Activated CD4-positive, alpha-beta T cell treated with anti-CD3 and anti-CD28 coated beads, Interleukin-2, amount 10 ng/mL, durations not matched to agents 7 days and 5 days (primary cell): ENCODE measurements at regions of chr11 and their contacts with region 1.

Region 1: GRCh38 chr11:128522055-128522942 is 65.1 kb downstream of the ETS1 start:
- DNase-seq: peak; percentile 92
- H3K4me3 Mint-ChIP-seq: peak overlapping the region; percentile 96
- H3K27ac Mint-ChIP-seq: peak overlapping the region; percentile 93
- H3K4me1 Mint-ChIP-seq: peaks cover 41% of the 10 kb centered on the region
- H3K27me3 Mint-ChIP-seq: no peaks in the 10 kb centered on the region

Region 2: DNA sequence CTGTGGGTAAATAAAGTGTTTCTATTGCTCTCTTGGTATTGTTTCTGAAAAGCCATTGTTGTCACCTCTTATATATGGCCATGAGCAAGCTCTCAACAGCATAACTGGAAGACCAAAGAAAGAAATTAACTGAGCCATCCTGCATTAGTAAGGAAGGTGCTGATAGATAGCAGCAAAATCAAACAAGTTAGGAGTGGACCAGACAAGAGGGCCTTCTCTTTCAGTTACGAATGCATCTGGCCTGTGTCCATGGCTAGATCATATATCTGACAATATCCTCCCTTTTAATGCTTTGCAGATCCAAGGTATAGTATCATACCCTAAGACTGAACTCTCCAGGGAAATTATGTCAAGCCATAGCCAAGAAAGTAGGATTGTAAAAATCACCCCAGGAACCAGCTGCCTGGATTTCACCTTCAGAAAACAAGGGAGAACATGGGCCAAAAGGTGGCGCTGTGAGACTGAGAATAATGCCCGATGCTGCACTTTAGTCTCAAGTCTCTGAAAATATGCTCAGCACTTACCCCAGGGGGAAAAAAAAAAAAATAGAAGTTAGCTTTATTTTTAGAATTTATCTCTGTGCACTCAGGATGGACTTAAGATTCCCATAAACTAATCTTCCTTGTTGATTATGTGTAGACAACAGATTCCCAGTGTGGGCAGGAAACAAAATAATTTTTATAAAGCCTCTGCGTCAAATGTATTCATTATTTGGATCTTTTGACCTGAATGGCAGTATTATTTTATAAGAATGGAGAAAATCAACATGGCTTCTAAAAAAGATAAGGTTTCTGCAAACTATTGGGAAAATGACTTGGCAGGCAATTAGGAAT is 350.0 kb before region 1 on chr11:
- CTCF ChIA-PET with region 1: no interaction called
- POLR2A ChIA-PET with region 1: no interaction called
- DNase-seq: peak; percentile 89
- H3K4me3 Mint-ChIP-seq: no peak overlapping the region
- H3K27ac Mint-ChIP-seq: no peak overlapping the region
- H3K4me1 Mint-ChIP-seq: peaks cover 6% of the 10 kb centered on the region
- H3K27me3 Mint-ChIP-seq: peaks cover 12% of the 10 kb centered on the region

Region 3: GRCh38 chr11:128290106-128290840 is 232.0 kb before region 1 on chr11:
- CTCF ChIA-PET with region 1: interaction called, 22 read pairs
- POLR2A ChIA-PET with region 1: no interaction called
- DNase-seq: peak; percentile 86
- H3K4me3 Mint-ChIP-seq: peak overlapping the region; percentile 83
- H3K27ac Mint-ChIP-seq: peak overlapping the region; percentile 94
- H3K4me1 Mint-ChIP-seq: peaks cover 90% of the 10 kb centered on the region
- H3K27me3 Mint-ChIP-seq: peaks cover 2% of the 10 kb centered on the region

Region 4: GRCh38 chr11:128472128-128473089 is 49.9 kb before region 1 on chr11:
- CTCF ChIA-PET with region 1: interaction called, 5 read pairs
- POLR2A ChIA-PET with region 1: interaction called, 15 read pairs
- DNase-seq: peak; percentile 72
- H3K4me3 Mint-ChIP-seq: peak overlapping the region; percentile 70
- H3K27ac Mint-ChIP-seq: peak overlapping the region; percentile 95
- H3K4me1 Mint-ChIP-seq: peaks cover 96% of the 10 kb centered on the region
- H3K27me3 Mint-ChIP-seq: no peaks in the 10 kb centered on the region

Region 5: GRCh38 chr11:128503245-128503991 is 18.9 kb before region 1 on chr11:
- CTCF ChIA-PET with region 1: interaction called, 23 read pairs
- POLR2A ChIA-PET with region 1: interaction called, 3 read pairs
- DNase-seq: peak; percentile 48
- H3K4me3 Mint-ChIP-seq: peak overlapping the region; percentile 71
- H3K27ac Mint-ChIP-seq: peak overlapping the region; percentile 89
- H3K4me1 Mint-ChIP-seq: peaks cover 95% of the 10 kb centered on the region
- H3K27me3 Mint-ChIP-seq: no peaks in the 10 kb centered on the region

Region 6: DNA sequence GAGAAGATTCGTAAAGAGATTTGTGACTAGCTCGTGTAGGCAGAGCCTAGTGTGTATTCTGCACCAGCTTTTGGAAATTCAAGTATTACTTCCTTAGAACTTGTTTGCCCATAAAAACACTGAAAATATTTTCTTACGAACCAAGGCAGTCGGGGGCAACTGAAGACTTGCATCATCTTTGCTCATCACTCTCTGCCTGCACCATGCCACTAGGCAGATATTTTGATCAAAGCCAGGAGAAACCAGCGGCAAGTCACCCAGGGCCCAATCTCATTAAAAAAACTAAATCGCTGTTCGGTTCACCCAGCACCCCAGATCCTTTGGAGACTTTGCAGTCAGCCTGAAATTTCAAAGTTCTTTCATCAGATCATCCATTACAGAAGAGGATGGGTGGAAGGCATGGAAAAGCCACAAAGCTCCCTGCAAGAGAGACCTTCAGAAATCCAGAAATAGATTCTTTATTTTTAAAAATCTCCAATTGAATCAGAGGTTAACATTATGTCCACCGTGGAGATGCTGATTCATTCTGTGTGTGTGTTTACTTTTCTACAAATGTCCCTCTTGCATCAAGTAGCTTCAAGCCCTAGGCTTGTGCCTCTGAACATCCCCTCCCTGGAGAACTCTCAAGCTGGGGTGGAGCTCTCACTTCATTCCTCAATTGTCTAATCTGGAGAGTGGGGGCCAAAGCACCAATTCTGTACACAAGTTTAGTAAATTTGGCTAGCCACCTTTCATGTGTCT is 13.4 kb before region 1 on chr11:
- CTCF ChIA-PET with region 1: interaction called, 23 read pairs
- POLR2A ChIA-PET with region 1: interaction called, 3 read pairs
- DNase-seq: no peak
- H3K4me3 Mint-ChIP-seq: peak overlapping the region; percentile 71
- H3K27ac Mint-ChIP-seq: peak overlapping the region; percentile 89
- H3K4me1 Mint-ChIP-seq: peaks cover 97% of the 10 kb centered on the region
- H3K27me3 Mint-ChIP-seq: no peaks in the 10 kb centered on the region

Region 7: GRCh38 chr11:128535468-128536457 is 13.5 kb after region 1 on chr11:
- CTCF ChIA-PET with region 1: interaction called, 11 read pairs
- POLR2A ChIA-PET with region 1: interaction called, 3 read pairs
- DNase-seq: no peak
- H3K4me3 Mint-ChIP-seq: no peak overlapping the region
- H3K27ac Mint-ChIP-seq: no peak overlapping the region
- H3K4me1 Mint-ChIP-seq: peaks cover 4% of the 10 kb centered on the region
- H3K27me3 Mint-ChIP-seq: peaks cover 4% of the 10 kb centered on the region

Region 8: GRCh38 chr11:128565881-128566280 is 43.6 kb after region 1 on chr11:
- CTCF ChIA-PET with region 1: no interaction called
- POLR2A ChIA-PET with region 1: no interaction called
- DNase-seq: no peak
- H3K4me3 Mint-ChIP-seq: no peak overlapping the region
- H3K27ac Mint-ChIP-seq: no peak overlapping the region
- H3K4me1 Mint-ChIP-seq: peaks cover 16% of the 10 kb centered on the region
- H3K27me3 Mint-ChIP-seq: no peaks in the 10 kb centered on the region

Region 9: DNA sequence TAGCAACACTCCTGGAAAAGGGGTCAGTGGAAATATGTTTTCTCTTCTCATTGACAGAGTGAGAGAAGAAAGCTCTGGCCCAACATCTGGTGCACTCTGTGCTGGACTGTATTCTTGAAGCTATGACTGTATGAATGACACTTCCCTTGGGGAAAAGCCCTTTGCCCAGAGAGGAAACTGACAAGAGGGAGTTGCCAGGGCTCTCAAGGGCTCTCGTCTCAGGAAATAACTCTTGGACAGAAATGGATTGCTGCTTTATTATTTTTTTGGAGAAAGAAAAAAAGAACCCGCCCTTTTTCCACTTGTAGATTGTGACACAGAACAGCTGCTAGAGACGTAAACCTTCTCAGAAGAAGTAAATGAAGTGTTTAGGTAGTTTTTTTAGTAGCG is 53.7 kb after region 1 on chr11:
- CTCF ChIA-PET with region 1: no interaction called
- POLR2A ChIA-PET with region 1: no interaction called
- DNase-seq: no peak
- H3K4me3 Mint-ChIP-seq: no peak overlapping the region
- H3K27ac Mint-ChIP-seq: no peak overlapping the region
- H3K4me1 Mint-ChIP-seq: peaks cover 27% of the 10 kb centered on the region
- H3K27me3 Mint-ChIP-seq: no peaks in the 10 kb centered on the region